Right ventricle myocardium superior (tissue), 1 donor: ENCODE measurements at regions of chr9 and their contacts with region 1.

Region 1: DNA sequence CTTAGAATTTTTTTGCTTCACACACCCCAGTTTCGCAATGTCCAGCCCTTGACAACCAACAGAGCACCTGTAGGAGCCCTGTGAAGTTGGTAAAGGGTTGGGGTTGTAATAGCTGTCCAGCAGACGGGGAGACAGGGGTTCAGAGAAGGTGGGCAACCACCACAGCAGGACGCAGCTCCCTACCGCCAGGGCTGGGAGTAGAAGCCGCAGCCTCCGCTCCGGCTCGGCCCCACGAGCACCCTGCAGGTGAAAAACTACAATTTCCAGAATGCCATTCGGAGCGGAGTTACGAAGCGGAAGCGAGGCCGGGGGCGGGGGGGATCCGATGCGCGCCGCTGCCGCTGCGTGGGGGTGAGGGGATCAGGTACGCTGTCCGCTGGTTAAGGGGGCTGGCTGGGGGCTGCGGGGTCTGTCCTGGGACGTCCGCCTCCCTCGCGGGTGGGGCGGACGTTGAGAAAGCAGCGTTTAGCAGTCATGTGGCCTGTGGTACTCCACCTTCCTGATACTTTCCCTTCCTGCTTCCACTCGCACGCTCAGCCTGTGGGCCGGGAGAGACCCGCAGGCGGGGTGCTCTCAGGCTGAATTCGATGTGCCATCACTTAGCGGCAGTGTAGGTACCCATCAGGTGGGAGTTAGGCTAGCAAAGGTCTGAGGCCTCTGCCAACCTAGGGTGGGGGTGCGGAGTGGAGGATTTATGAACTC is at the start of gene TRMT10B:
- DNase-seq: peak; percentile 82
- ATAC-seq: peak; percentile 98
- total RNA-seq, gene TRMT10B: 3.7 TPM

Region 2: DNA sequence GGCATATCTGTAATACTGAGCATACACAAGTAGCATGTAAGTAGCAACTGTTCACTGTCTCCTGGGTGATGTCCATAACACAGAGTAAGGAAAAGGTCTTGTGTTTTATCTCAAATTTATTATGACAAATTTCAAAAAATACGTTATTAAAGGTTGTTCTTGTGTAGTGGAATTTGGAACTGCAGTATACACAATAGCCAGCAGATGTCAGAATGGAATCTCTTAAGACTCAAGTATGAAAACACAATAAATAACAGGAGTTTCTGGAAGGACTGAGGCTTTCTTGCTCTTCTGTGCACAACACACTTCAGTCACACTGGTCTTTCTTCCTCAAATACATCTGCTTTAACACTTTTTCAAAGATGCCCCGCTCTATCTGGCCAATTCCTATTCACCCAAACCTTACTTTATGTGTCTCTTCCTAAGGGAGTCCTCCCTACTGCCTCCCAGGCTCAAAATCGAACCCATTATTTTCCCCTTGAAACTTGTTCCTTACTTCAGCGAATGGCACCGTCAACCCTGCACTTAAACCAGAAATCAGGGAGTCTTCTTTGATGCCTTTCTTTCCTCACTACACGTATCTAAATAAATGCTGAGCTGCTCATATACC is 171.0 kb before region 1 on chr9:
- intact Hi-C with region 1: loop called (anchors 10 kb)
- DNase-seq: no peak
- ATAC-seq: peak; percentile 65

Region 3: GRCh38 chr9:37914701-37915337 is 161.2 kb after region 1 on chr9:
- intact Hi-C with region 1: no loop called
- DNase-seq: no peak
- ATAC-seq: no peak